WTC11 (cell line): ENCODE measurements at regions of chr1 and their contacts with region 1.

Region 1: DNA sequence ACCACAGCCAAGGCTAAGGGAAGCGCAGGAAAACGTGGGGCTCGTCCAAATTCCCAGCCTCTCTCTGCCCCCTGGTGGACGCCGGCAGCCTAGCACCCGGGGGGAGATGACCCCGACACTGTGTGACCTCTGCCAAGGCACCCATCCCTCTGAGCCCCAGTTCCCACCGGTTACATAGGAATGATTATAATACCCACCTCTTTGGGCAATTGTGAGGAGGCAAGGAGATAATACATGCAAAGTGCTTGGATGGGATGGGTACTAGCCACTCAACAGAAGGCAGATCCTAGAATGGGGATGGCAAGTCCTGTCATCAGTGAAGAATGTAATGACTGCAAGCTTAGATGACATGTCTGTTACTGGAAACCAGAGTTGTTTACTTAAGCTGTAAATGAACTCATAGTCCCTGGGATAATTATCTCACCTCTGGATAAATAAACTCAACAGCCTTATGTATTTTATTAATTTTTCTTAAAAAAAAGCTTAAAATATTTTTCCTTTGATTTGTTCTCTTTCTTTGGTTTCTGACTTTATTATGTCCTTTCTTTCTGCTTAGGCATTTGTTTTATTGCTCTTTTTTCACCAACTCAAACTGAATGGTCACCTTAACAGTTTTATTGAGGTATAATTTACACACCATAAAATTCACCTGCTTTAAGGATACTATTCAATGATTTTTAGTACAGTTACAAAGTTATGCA is 11.3 kb upstream of the BMP8B start:
- DNase-seq: peak; percentile 88
- ATAC-seq: peak; percentile 92
- H3K4me3 Mint-ChIP-seq: no peak overlapping the region
- H3K27ac Mint-ChIP-seq: no peak overlapping the region
- H3K4me1 Mint-ChIP-seq: peaks cover 9% of the 10 kb centered on the region
- H3K27me3 Mint-ChIP-seq: peaks cover 21% of the 10 kb centered on the region
- CTCF ChIP-seq: peak; percentile 87

Region 2: DNA sequence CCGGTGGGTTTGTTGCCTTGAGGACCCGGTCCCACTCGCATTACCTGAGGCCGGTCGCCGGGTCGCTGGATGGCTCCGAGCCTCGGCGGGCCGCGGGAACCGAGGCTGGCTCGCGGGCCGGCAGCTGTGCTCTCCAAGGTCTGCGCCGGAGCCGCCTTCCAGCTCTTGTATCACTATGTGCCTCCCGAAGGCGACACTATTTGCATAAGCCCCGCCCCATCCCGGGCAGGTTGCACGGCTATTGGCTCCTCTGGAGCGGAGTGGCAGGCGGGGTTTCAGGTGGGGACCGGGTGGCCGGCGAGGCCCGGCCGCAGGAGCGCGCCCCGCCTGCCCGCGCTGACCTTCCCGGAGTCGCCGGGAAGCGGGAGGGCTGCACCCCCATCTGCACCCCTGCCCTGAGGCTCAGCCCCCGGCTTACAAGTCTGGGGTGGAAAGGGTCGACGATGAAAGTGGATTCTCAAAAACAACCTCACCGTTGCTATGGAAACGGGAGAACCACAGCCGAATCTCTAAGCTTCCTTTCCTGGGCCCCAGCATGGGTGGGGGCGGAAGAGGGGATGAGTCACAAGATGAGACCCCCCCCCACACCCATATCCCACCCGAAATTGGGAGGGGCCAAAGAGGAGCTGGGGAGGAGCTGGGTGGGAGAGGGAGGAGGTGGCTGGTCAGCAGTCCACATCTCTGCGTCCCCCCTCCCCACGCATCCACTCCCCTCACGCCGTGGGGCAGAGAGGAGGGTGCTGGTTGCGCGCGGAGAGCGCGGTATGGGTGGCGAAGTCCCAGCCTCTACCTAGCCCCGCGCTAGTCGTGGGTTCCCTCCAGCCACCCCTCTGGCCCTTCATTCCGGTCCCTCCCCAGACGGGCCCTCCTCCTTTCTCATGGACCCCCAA is 108.4 kb before region 1 on chr1 and contains the start of gene HPCAL4:
- CTCF ChIA-PET with region 1: interaction called, 12 read pairs
- POLR2A ChIA-PET with region 1: no interaction called
- DNase-seq: peak; percentile 98
- ATAC-seq: peak; percentile 98
- H3K4me3 Mint-ChIP-seq: peak within 1 kb of the TSS; percentile 59
- H3K27ac Mint-ChIP-seq: no peak within 1 kb of the TSS
- H3K4me1 Mint-ChIP-seq: peaks cover 4% of the 10 kb centered on the region
- H3K27me3 Mint-ChIP-seq: peaks cover 100% of the 10 kb centered on the region
- CTCF ChIP-seq: no peak
- total RNA-seq, gene HPCAL4: 0.50 to 0.80 TPM (median 0.60 TPM) in 3 replicates

Region 3: GRCh38 chr1:39738622-39739366 is 61.1 kb before region 1 on chr1 and contains the start of gene PPIE:
- CTCF ChIA-PET with region 1: interaction called, 12 read pairs
- POLR2A ChIA-PET with region 1: no interaction called
- DNase-seq: peak; percentile 92
- ATAC-seq: peak; percentile 98
- H3K4me3 Mint-ChIP-seq: peak within 1 kb of the TSS; percentile 89
- H3K27ac Mint-ChIP-seq: peak within 1 kb of the TSS; percentile 66; the same call in 1 of the 2 replicates
- H3K4me1 Mint-ChIP-seq: peaks cover 13% of the 10 kb centered on the region
- H3K27me3 Mint-ChIP-seq: peaks cover 48% of the 10 kb centered on the region
- CTCF ChIP-seq: no peak
- total RNA-seq, gene PPIE: 42.5 to 50.7 TPM (median 48.9 TPM) in 3 replicates

Region 4: GRCh38 chr1:39788758-39789570 is 11.0 kb before region 1 on chr1 and contains the start of gene BMP8B:
- CTCF ChIA-PET with region 1: interaction called, 17 read pairs
- POLR2A ChIA-PET with region 1: no interaction called
- DNase-seq: peak; percentile 60
- ATAC-seq: peak; percentile 68
- H3K4me3 Mint-ChIP-seq: peak within 1 kb of the TSS; percentile 77
- H3K27ac Mint-ChIP-seq: no peak within 1 kb of the TSS
- H3K4me1 Mint-ChIP-seq: peaks cover 12% of the 10 kb centered on the region
- H3K27me3 Mint-ChIP-seq: peaks cover 75% of the 10 kb centered on the region
- CTCF ChIP-seq: no peak
- total RNA-seq, gene BMP8B: 0.74 to 0.92 TPM (median 0.82 TPM) in 3 replicates